OCI-LY7 (cell line): ENCODE measurements at regions of chr14 and their contacts with region 1.

Region 1: DNA sequence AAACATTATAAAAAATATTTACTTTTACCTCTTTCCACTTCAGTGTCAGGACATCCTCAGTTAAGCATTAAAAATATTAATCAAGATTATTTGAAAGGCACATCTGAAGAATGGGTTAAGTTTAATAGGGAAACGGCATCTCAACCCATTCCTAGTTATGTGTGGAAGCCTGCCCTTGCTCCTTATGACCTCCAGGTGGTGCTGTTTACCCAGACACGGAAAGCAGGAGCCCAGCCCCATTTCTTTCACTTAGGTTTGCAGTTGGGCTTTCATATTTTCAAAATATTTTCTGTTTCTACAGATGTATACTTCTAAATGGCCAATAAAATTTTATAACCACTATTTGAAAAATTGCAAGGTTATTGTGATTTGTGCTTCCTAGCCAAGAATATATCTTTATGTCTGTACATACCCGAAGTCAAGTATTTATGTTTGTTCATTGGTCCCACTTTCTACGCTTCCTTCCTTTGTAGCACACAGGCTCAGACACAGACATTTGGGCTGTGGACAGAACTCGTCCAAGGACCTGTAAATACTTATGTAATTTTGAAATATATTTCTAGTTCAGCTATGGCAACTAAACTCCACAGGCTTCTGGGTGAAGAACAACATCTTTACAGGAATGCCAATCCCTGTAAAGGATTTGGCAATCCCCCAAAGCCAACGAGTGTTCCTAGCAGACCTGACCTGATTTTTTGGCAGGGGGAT is 247.1 kb downstream of the AKAP6 start:
- DNase-seq: peak; percentile 51
- H3K4me3 ChIP-seq: no peak overlapping the region
- H3K27ac ChIP-seq: no peak overlapping the region
- H3K4me1 ChIP-seq: no peaks in the 10 kb centered on the region
- CTCF ChIP-seq: peak; percentile 98

Region 2: GRCh38 chr14:32560209-32560857 is 15.9 kb before region 1 on chr14:
- CTCF ChIA-PET with region 1: no interaction called
- POLR2A ChIA-PET with region 1: no interaction called
- intact Hi-C with region 1: no loop called
- DNase-seq: peak; percentile 54
- H3K4me3 ChIP-seq: no peak overlapping the region
- H3K27ac ChIP-seq: no peak overlapping the region
- H3K4me1 ChIP-seq: no peaks in the 10 kb centered on the region
- CTCF ChIP-seq: peak; percentile 90

Region 3: GRCh38 chr14:32662211-32662610 is 86.0 kb after region 1 on chr14:
- CTCF ChIA-PET with region 1: no interaction called
- POLR2A ChIA-PET with region 1: no interaction called
- intact Hi-C with region 1: no loop called
- DNase-seq: no peak
- H3K4me3 ChIP-seq: no peak overlapping the region
- H3K27ac ChIP-seq: no peak overlapping the region
- H3K4me1 ChIP-seq: no peaks in the 10 kb centered on the region
- CTCF ChIP-seq: no peak

Region 4: DNA sequence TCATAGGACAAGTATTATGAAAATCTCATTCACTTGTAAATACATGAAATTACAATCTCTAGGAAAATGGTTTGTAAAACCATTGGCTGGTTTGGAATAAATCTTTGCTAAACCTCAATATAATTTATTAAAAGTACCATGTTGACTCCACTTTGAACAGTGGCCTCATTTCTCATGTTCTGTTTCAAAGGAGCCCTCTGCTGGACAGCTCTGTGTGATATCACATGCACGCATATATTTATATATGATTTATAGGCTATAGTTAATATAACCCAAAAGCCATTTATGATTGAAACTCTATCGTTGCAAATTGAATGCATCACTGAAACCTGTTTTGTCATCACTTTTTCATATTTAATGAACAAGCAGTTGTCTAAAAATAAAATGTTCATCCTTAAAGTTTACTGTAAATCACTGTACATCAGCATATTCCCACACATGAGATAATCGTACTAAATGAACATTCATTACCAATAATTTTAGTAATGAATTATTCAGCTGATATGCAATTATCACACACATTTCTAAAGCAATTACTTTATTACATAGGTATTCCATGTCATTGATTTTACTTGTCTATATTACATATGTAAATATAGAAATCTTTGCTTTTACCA is 856.3 kb after region 1 on chr14:
- CTCF ChIA-PET with region 1: no interaction called
- POLR2A ChIA-PET with region 1: no interaction called
- intact Hi-C with region 1: loop called (anchors 5 kb)
- DNase-seq: peak; percentile 41
- H3K4me3 ChIP-seq: no peak overlapping the region
- H3K27ac ChIP-seq: no peak overlapping the region
- H3K4me1 ChIP-seq: no peaks in the 10 kb centered on the region
- CTCF ChIP-seq: peak; percentile 79

Region 5: GRCh38 chr14:34300882-34301734 is 1724.9 kb after region 1 on chr14:
- CTCF ChIA-PET with region 1: no interaction called
- POLR2A ChIA-PET with region 1: no interaction called
- intact Hi-C with region 1: loop called (anchors 10 kb)
- DNase-seq: peak; percentile 42
- H3K4me3 ChIP-seq: no peak overlapping the region
- H3K27ac ChIP-seq: no peak overlapping the region
- H3K4me1 ChIP-seq: no peaks in the 10 kb centered on the region
- CTCF ChIP-seq: peak; percentile 86